Mammary epithelial cell (primary cell): ENCODE measurements at regions of chr3 and their contacts with region 1.

Region 1: DNA sequence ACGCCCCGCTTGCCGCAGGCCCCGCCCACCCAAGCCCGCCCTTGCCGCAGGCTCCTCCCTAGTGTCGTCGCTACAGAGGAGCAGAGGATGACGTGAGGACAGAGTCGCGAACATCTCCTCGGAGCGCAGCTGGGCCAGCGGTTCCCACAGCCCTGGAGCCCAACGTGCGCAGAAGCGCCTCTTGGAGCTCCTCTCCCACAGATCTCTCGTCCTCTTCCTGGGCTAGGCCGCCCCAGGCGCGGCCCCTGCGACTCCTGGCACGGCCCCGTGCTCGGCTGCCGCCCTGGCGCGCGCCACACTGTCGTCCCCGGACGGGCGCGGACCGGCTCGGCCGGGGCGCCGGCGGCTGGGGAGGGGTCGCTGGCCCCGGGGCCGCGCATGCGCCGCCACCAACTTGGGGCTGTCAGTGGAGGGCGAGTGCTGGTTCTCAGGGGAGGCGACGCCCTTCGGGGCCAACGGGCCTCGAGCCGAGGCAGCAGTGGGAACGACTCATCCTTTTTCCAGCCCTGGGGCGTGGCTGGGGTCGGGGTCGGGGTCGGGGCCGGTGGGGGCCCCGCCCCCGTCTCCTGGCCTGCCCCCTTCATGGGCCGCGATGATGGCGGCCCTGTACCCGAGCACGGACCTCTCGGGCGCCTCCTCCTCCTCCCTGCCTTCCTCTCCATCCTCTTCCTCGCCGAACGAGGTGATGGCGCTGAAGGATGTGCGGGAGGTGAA is at the start of gene TRPC1:
- DNase-seq: peak; percentile 79
- H3K4me3 ChIP-seq: peak within 1 kb of the TSS; percentile 73 to 99 (median 86)
- H3K27ac ChIP-seq: peak within 1 kb of the TSS; percentile 79
- H3K4me1 ChIP-seq: no peaks in the 10 kb centered on the region
- H3K27me3 ChIP-seq: no peaks in the 10 kb centered on the region
- CTCF ChIP-seq: no peak
- total RNA-seq, gene TRPC1: 15.7 to 26.8 TPM

Region 2: DNA sequence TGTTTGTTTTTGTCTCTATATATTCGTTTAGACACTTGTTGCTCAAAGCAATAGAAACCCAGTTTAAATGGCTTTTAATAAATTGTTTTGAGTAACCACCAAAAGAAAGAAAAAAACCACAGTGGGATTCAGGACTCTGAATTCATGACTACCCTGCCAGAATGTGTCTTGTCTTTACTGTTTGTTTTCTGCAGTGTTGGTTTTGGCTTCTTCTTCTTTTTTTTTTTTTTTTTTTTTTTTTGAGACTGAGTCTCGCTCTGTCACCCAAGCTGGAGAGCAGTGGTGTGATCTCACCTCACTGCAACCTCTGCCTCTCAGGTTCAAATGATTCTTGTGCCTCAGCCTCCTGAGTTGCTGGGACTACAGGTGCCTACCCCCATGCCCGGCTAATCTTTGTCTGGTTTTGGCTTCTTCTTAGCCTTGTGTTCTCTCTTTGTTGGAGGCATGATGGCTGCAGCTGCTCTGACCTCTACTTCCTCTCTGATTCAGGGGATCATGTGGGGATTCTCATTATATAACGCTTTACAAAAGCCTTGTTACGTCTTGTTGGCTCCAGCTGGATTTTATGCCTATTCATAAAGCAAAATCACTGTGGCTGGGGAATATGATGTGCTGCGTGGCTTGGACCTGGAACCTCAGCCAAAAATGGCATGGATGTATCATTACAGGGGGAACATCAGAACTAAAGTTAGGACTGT is 74.0 kb before region 1 on chr3:
- CTCF ChIA-PET with region 1: no interaction called
- dilution Hi-C with region 1: no loop called
- in situ Hi-C with region 1: no loop called
- intact Hi-C with region 1: loop called (anchors 1 kb)
- DNase-seq: no peak
- H3K4me3 ChIP-seq: no peak overlapping the region
- H3K27ac ChIP-seq: no peak overlapping the region
- H3K4me1 ChIP-seq: peaks cover 31% of the 10 kb centered on the region
- H3K27me3 ChIP-seq: no peaks in the 10 kb centered on the region
- CTCF ChIP-seq: no peak

Region 3: GRCh38 chr3:142746646-142747045 is 22.5 kb after region 1 on chr3:
- CTCF ChIA-PET with region 1: no interaction called
- dilution Hi-C with region 1: no loop called
- in situ Hi-C with region 1: no loop called
- intact Hi-C with region 1: loop called (anchors 2 kb)
- DNase-seq: no peak
- H3K4me3 ChIP-seq: no peak overlapping the region
- H3K27ac ChIP-seq: no peak overlapping the region
- H3K4me1 ChIP-seq: no peaks in the 10 kb centered on the region
- H3K27me3 ChIP-seq: no peaks in the 10 kb centered on the region
- CTCF ChIP-seq: no peak

Region 4: GRCh38 chr3:142802891-142803290 is 78.8 kb after region 1 on chr3:
- CTCF ChIA-PET with region 1: no interaction called
- dilution Hi-C with region 1: loop called (anchors 5 kb)
- in situ Hi-C with region 1: no loop called
- intact Hi-C with region 1: no loop called
- DNase-seq: no peak
- H3K4me3 ChIP-seq: no peak overlapping the region
- H3K27ac ChIP-seq: no peak overlapping the region
- H3K4me1 ChIP-seq: peaks cover 2% of the 10 kb centered on the region
- H3K27me3 ChIP-seq: no peaks in the 10 kb centered on the region
- CTCF ChIP-seq: no peak

Region 5: GRCh38 chr3:142850386-142851023 is 126.4 kb after region 1 on chr3:
- CTCF ChIA-PET with region 1: no interaction called
- dilution Hi-C with region 1: no loop called
- in situ Hi-C with region 1: no loop called
- intact Hi-C with region 1: no loop called
- DNase-seq: peak; percentile 93
- H3K4me3 ChIP-seq: no peak overlapping the region
- H3K27ac ChIP-seq: no peak overlapping the region
- H3K4me1 ChIP-seq: peaks cover 31% of the 10 kb centered on the region
- H3K27me3 ChIP-seq: no peaks in the 10 kb centered on the region
- CTCF ChIP-seq: no peak